CD4-positive, alpha-beta memory T cell (primary cell): ENCODE measurements at regions of chr12 and their contacts with region 1.

Region 1: GRCh38 chr12:123580772-123581171 is 3.6 kb upstream of the TMED2 start:
- DNase-seq: no peak
- H3K4me3 ChIP-seq: no peak overlapping the region
- H3K4me3 Mint-ChIP-seq: peak overlapping the region in 1 of 8 donors; percentile 31
- H3K27ac ChIP-seq: no peak overlapping the region
- H3K27ac Mint-ChIP-seq: peak overlapping the region in 2 of 7 donors; percentile 48 to 97
- H3K4me1 ChIP-seq: peaks cover 26% of the 10 kb centered on the region
- H3K4me1 Mint-ChIP-seq: peaks cover 13 to 44% (median 26%) of the 10 kb centered on the region in 4 donors
- H3K27me3 ChIP-seq: no peaks in the 10 kb centered on the region
- H3K27me3 Mint-ChIP-seq: no peaks in the 10 kb centered on the region

Region 2: DNA sequence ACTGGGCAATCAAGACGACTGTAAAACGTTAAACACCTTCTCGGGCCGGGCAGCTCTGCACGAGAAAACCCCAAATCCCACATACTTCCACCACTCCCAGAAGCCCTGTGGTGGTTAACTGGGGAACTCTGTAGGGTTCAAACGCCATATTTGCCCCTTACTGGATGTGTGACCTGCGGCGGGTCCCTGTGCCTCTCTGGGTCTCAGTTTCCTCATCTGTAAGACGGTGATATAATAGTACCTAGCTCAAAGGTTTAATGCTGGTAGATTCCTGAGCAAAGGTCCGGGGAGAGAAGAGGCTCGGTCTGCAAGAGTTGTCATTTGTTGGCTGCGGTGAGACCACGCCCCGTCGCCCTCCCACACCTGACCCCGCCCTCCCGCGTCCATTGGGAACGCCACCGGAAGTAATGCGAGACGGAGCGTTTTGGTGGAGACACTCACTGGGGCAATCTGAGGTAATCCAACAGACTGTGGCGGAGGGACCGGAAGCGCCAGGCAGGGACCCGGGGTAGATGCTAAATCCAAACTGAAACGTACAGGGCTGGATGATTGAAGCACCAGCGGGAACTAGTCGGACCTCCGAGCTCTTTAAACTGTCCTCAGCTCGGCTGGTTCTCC is 606.4 kb before region 1 on chr12:
- CTCF ChIA-PET with region 1: no interaction called
- POLR2A ChIA-PET with region 1: interaction called, 3 read pairs
- intact Hi-C with region 1: loop called (anchors 1 kb)
- DNase-seq: peak; percentile 97 to 99 (median 98)
- H3K4me3 ChIP-seq: peak overlapping the region; percentile 71 to 100
- H3K4me3 Mint-ChIP-seq: peak overlapping the region; percentile 89 to 99 (median 98)
- H3K27ac ChIP-seq: peak overlapping the region; percentile 98
- H3K27ac Mint-ChIP-seq: peak overlapping the region; percentile 98 to 100 (median 99)
- H3K4me1 ChIP-seq: peaks cover 41% of the 10 kb centered on the region
- H3K4me1 Mint-ChIP-seq: peaks cover 10 to 49% (median 30%) of the 10 kb centered on the region in 4 donors
- H3K27me3 ChIP-seq: no peaks in the 10 kb centered on the region
- H3K27me3 Mint-ChIP-seq: no peaks in the 10 kb centered on the region

Region 3: GRCh38 chr12:123388177-123388947 is 192.4 kb before region 1 on chr12:
- CTCF ChIA-PET with region 1: interaction called, 3 read pairs
- POLR2A ChIA-PET with region 1: no interaction called
- intact Hi-C with region 1: loop called (anchors 1 kb)
- DNase-seq: peak; percentile 76 to 85 (median 79)
- H3K4me3 ChIP-seq: peak overlapping the region; percentile 71 to 84
- H3K4me3 Mint-ChIP-seq: peak overlapping the region; percentile 86 to 92 (median 88)
- H3K27ac ChIP-seq: peak overlapping the region; percentile 70
- H3K27ac Mint-ChIP-seq: peak overlapping the region; percentile 85 to 96 (median 92)
- H3K4me1 ChIP-seq: peaks cover 45% of the 10 kb centered on the region
- H3K4me1 Mint-ChIP-seq: peaks cover 18 to 57% (median 45%) of the 10 kb centered on the region in 4 donors
- H3K27me3 ChIP-seq: no peaks in the 10 kb centered on the region
- H3K27me3 Mint-ChIP-seq: no peaks in the 10 kb centered on the region

Region 4: GRCh38 chr12:123457980-123458783 is 122.6 kb before region 1 on chr12 and contains the start of gene SNRNP35:
- CTCF ChIA-PET with region 1: interaction called, 3 read pairs
- POLR2A ChIA-PET with region 1: interaction called, 3 read pairs
- intact Hi-C with region 1: loop called (anchors 1 kb)
- DNase-seq: peak; percentile 87 to 91 (median 89)
- H3K4me3 ChIP-seq: peak within 1 kb of the TSS; percentile 58 to 95
- H3K4me3 Mint-ChIP-seq: peak within 1 kb of the TSS; percentile 97 to 100 (median 100)
- H3K27ac ChIP-seq: peak within 1 kb of the TSS; percentile 95
- H3K27ac Mint-ChIP-seq: peak within 1 kb of the TSS; percentile 98 to 100 (median 100)
- H3K4me1 ChIP-seq: peaks cover 26% of the 10 kb centered on the region
- H3K4me1 Mint-ChIP-seq: peaks cover 19 to 37% (median 29%) of the 10 kb centered on the region in 4 donors
- H3K27me3 ChIP-seq: no peaks in the 10 kb centered on the region
- H3K27me3 Mint-ChIP-seq: no peaks in the 10 kb centered on the region
- total RNA-seq, gene SNRNP35: 44.0 to 49.5 TPM

Region 5: GRCh38 chr12:123601602-123602489 is 21.1 kb after region 1 on chr12 and contains the start of gene DDX55:
- CTCF ChIA-PET with region 1: interaction called, 3 read pairs
- POLR2A ChIA-PET with region 1: interaction called, 7 read pairs
- intact Hi-C with region 1: loop called (anchors 1 kb)
- DNase-seq: peak; percentile 84 to 87 (median 86)
- H3K4me3 ChIP-seq: peak within 1 kb of the TSS; percentile 97 to 99
- H3K4me3 Mint-ChIP-seq: peak within 1 kb of the TSS; percentile 90 to 99 (median 96)
- H3K27ac ChIP-seq: peak within 1 kb of the TSS; percentile 92
- H3K27ac Mint-ChIP-seq: peak within 1 kb of the TSS; percentile 91 to 96 (median 95)
- H3K4me1 ChIP-seq: peaks cover 27% of the 10 kb centered on the region
- H3K4me1 Mint-ChIP-seq: peaks cover 18 to 42% (median 29%) of the 10 kb centered on the region in 4 donors
- H3K27me3 ChIP-seq: no peaks in the 10 kb centered on the region
- H3K27me3 Mint-ChIP-seq: no peaks in the 10 kb centered on the region
- total RNA-seq, gene DDX55: 50.5 to 58.7 TPM